Body of pancreas (tissue), 4 donors: ENCODE measurements at regions of chr22 and their contacts with region 1.

Region 1: DNA sequence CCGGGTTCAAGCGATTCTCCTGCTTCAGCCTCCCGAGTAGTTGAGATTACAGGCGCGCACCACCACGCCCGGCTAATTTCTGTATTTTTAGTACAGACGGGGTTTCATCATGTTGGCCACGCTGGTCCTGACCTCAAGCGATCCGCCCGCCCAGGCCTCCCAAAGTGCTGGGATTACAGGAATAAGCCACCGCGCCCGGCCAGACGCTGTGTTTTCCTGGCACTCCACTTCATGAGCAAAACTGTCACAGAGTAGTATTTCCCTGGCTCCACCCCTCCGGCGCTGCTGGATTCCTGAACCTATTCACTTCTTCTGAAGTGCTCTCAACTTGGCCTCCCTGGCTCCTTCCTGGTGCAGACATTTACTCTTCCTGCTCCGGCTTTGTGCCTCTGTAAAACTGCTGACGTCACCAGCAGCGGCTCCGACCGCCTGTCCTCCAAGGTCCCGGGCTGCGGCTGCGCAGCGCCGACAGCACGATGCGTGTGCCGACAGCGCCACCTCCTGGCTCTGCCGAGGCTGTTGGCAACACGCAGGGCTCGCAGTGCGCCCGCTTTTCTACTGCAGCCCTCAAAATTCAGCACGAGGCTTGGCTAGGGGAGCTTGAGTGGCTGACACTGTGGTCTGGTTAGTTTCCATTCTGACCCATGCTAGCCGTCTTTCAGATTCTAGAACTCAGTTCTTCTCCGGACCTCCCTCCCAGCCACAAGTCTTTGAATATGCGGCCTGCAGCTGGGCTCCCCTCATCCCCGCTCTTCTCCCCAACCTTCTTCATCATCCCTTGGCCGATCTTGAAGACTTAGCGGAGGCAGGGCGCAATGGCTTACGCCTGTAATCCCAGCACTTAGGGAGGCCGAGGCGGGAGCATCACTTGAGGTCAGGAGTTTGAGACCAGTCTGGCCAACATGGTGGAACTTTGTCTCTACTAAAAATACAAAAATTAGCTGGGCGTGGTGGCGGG is 36.6 kb downstream of the APOL3 start:
- DNase-seq: peak; percentile 96 to 98 (median 98)
- ATAC-seq: peak; percentile 99
- H3K4me3 ChIP-seq: no peak overlapping the region
- H3K27ac ChIP-seq: peak overlapping the region; percentile 77 to 90 (median 85)
- H3K4me1 ChIP-seq: peaks cover 7% of the 10 kb centered on the region
- H3K27me3 ChIP-seq: no peaks in the 10 kb centered on the region
- CTCF ChIP-seq: peak; percentile 96 to 100 (median 99)
- POLR2A ChIP-seq: peak in 2 of 3 donors; percentile 53 to 64

Region 2: DNA sequence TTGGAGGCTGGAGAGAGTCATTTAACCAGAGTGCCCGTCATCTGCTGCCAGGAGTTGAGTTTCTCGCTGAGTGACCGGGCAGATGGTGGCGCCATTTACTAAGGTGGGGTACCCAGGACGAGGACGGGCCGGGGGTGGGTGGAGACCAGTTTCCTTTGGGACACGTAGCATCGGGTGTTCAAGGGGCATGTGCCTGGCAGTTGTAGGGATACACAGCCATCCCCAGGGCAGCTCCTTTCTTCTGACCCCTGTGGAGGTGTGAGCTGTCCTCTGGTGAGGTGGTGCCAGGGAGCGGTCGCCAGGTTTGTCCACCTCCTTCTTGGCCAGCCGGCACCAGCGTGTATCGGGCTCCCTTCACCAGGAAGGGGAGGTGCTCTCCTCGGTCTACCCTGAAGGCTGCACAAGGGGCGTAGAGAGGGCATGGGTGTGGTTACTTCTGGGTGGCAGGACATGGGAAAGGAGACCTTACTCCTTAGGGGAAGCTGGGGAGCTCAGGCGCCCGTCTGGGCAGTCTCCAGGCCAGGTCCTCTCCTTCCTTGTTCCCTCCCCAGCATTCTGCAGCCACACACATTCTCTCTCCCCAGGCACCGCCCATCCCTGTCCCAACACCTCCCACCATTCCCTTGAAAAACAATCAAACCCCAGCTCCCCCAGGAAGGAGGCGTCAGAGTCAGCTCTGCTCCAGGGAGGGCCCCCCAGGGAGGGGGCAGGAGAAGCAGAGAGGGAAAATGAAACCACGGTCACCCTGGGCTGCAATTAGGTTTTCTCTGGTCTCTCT is 496.5 kb before region 1 on chr22:
- intact Hi-C with region 1: loop called (anchors 10 kb)
- DNase-seq: peak; percentile 87 to 91 (median 88)
- ATAC-seq: peak; percentile 88
- H3K4me3 ChIP-seq: peak overlapping the region; percentile 16 to 31
- H3K27ac ChIP-seq: peak overlapping the region; percentile 84 to 99 (median 95)
- H3K4me1 ChIP-seq: peaks cover 23% of the 10 kb centered on the region
- H3K27me3 ChIP-seq: no peaks in the 10 kb centered on the region
- CTCF ChIP-seq: peak; percentile 24 to 78 (median 49)
- POLR2A ChIP-seq: peak; percentile 71 to 97 (median 92)

Region 3: GRCh38 chr22:35930933-35931332 is 193.0 kb before region 1 on chr22:
- intact Hi-C with region 1: loop called (anchors 10 kb)
- DNase-seq: peak in 2 of 4 donors; percentile 36 to 68
- ATAC-seq: peak; percentile 92
- H3K4me3 ChIP-seq: no peak overlapping the region
- H3K27ac ChIP-seq: no peak overlapping the region
- H3K4me1 ChIP-seq: no peaks in the 10 kb centered on the region
- H3K27me3 ChIP-seq: no peaks in the 10 kb centered on the region
- CTCF ChIP-seq: peak; percentile 45 to 93 (median 80)
- POLR2A ChIP-seq: no peak